ENCODE measurements at regions of chr9 and their contacts with region 1.

Region 1: GRCh38 chr9:109344866-109345265 is 24.0 kb upstream of the EPB41L4B start:
- DNase-seq: no peak
- H3K4me3 ChIP-seq: no peak overlapping the region
- H3K27ac ChIP-seq: peak overlapping the region in 3 of 4 donors; percentile 71 to 76 (median 74)
- H3K4me1 ChIP-seq: peaks cover 0 to 13% (median 6%) of the 10 kb centered on the region in 4 donors
- H3K27me3 ChIP-seq: no peaks in the 10 kb centered on the region
- CTCF ChIP-seq: no peak
- EP300 ChIP-seq: no peak
- POLR2A ChIP-seq: no peak

Region 2: GRCh38 chr9:109401990-109402318 is 57.1 kb after region 1 on chr9:
- in situ Hi-C with region 1: no loop called
- intact Hi-C with region 1: loop called (anchors 2 kb)
- DNase-seq: no peak
- H3K4me3 ChIP-seq: no peak overlapping the region
- H3K27ac ChIP-seq: no peak overlapping the region
- H3K4me1 ChIP-seq: no peaks in the 10 kb centered on the region
- H3K27me3 ChIP-seq: no peaks in the 10 kb centered on the region
- CTCF ChIP-seq: no peak
- EP300 ChIP-seq: no peak
- POLR2A ChIP-seq: no peak

Region 3: GRCh38 chr9:110021891-110022290 is 677.0 kb after region 1 on chr9:
- in situ Hi-C with region 1: no loop called
- intact Hi-C with region 1: no loop called
- DNase-seq: no peak
- H3K4me3 ChIP-seq: no peak overlapping the region
- H3K27ac ChIP-seq: no peak overlapping the region
- H3K4me1 ChIP-seq: no peaks in the 10 kb centered on the region
- H3K27me3 ChIP-seq: no peaks in the 10 kb centered on the region
- CTCF ChIP-seq: no peak
- EP300 ChIP-seq: no peak
- POLR2A ChIP-seq: no peak